ENCODE measurements at regions of chr17 and their contacts with region 1.

Region 1: DNA sequence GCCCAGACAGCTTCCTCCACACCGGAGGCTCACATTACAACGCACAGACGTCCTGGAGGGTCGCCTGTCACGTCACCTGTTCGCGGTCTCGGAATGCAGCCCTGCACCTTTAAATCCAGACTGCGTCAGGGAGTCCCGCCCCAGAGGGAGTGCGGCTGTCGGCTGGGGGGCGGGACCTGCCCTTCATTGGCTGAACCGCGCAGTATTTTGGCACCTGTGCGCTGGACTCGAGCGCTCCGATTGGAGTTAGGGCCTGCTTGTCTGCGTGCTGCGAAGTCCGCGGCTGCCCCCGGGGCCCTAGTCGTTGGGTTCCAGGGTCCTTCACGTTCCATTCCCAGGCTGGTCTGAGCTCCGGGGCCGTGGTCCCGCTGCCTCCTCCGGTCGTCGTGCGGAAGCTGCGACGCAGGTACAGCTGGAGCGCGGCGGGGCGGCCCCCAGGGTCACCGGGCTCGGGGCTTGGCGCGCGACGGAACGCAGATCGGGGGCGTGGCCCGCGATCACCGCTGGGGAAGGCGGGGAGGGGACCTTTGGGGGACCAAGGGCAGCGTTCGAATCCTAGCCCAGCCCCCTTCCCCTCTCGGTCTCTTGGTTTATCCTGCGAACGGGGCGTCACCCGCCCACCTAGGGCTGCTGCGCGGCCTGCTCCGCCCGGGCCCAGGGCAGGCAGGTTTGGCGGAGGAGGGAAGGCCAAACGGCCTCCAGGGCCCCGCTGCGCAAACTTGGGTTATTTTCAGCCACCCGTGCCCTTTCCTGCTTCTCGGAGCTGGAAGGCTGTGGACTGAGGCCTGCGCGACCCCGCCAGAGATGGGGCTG is at the start of gene MIEF2:
- DNase-seq: peak; percentile 96
- H3K4me3 ChIP-seq: peak within 1 kb of the TSS; percentile 45 to 78 (median 65)
- H3K27ac ChIP-seq: peak within 1 kb of the TSS; percentile 23
- H3K4me1 ChIP-seq: peaks cover 14% of the 10 kb centered on the region
- H3K27me3 ChIP-seq: no peaks in the 10 kb centered on the region
- CTCF ChIP-seq: no peak
- POLR2A ChIP-seq: peak; percentile 52
- total RNA-seq, gene MIEF2: 8.3 and 8.5 TPM in 2 replicates

Region 2: DNA sequence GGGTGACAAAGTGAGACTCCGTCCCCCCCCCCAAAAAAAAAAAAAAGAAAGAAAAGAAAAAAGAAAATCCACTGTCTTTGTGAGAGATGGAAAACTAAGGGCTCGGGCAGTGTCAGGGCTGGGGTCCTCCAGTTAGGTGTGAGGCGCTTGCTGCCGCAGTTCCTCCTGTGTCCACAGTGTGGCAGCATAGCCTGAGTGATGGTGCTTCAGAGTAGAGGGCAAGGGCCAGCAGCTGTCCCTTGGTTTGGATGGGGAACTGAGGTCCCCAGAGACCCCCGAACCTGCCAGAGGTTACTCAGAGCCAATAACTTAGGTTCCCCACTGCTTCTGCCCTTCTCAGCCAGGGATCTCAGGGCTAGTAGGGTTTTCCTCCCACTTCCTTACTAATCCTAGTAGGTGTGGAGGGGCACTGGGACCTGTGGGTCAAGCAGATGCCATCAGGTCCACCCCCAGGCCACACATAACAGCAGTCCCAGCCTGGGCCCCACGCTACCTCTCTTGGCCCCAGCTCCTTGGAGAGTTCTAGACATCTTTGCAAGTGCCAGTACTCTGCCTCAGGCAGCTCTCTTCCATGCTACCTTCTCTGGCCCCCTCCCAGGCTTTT is 43.0 kb before region 1 on chr17:
- CTCF ChIA-PET with region 1: interaction called, 3 read pairs
- POLR2A ChIA-PET with region 1: no interaction called
- dilution Hi-C with region 1: no loop called
- intact Hi-C with region 1: loop called (anchors 1 kb)
- DNase-seq: peak; percentile 63
- H3K4me3 ChIP-seq: no peak overlapping the region
- H3K27ac ChIP-seq: no peak overlapping the region
- H3K4me1 ChIP-seq: peaks cover 7% of the 10 kb centered on the region
- H3K27me3 ChIP-seq: no peaks in the 10 kb centered on the region
- CTCF ChIP-seq: peak; percentile 82 to 95
- POLR2A ChIP-seq: no peak

Region 3: GRCh38 chr17:18225121-18225566 is 35.4 kb before region 1 on chr17:
- CTCF ChIA-PET with region 1: no interaction called
- POLR2A ChIA-PET with region 1: no interaction called
- dilution Hi-C with region 1: no loop called
- intact Hi-C with region 1: loop called (anchors 1 kb)
- DNase-seq: peak; percentile 91
- H3K4me3 ChIP-seq: peak overlapping the region in 1 of 3 experiments; percentile 30
- H3K27ac ChIP-seq: no peak overlapping the region
- H3K4me1 ChIP-seq: peaks cover 18% of the 10 kb centered on the region
- H3K27me3 ChIP-seq: no peaks in the 10 kb centered on the region
- CTCF ChIP-seq: no peak
- POLR2A ChIP-seq: no peak

Measured in endothelial cell of umbilical vein (primary cell).